ENCODE measurements at regions of chr5 and their contacts with region 1.

Region 1: GRCh38 chr5:80656425-80656824 is 1.6 kb upstream of the DHFR start:
- DNase-seq: no peak
- H3K4me3 ChIP-seq: no peak overlapping the region
- H3K27ac ChIP-seq: no peak overlapping the region
- H3K27me3 ChIP-seq: no peaks in the 10 kb centered on the region
- CTCF ChIP-seq: peak; percentile 14; the same call in 1 of the 2 replicates

Region 2: DNA sequence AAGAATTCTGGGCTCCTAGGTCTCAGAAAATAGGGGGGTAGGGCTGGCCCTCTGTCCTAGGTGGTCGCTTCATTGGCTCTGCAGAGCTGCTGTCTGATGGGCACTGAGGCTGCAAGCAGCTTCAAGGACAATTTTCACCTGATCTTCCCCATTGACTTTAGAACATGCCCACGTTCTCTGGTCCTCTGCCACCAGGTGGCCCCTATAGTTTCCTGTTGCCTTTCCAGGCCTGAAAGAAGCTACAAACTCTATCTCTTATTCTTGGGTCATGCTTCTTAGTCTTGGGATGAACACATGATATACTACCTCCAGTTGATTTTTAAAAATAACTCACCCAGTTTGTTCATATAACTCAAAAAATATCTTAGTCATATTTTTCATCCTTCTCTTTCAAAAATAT is 310.4 kb before region 1 on chr5:
- CTCF ChIA-PET with region 1: no interaction called
- POLR2A ChIA-PET with region 1: no interaction called
- DNase-seq: no peak
- H3K4me3 ChIP-seq: no peak overlapping the region
- H3K27ac ChIP-seq: no peak overlapping the region
- H3K27me3 ChIP-seq: no peaks in the 10 kb centered on the region
- CTCF ChIP-seq: peak; percentile 37

Region 3: DNA sequence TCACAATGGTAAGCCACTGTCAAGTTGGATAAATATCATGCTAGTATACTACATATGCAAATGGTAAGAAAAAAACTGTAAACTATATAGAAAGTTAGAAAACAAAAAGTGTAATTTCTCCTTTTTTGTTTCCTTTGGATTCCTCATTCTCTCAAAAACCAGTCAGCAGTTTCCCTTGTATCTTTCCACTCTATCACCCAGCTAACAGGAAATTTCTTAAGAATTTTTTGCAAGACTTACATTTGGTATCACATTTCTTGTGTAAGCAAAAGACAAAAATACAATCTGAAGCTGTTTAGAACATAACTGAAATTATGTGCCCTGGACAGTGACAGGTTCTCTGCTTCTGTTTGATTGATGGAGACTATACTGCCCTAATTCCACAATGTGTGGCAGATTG is 27.1 kb before region 1 on chr5:
- CTCF ChIA-PET with region 1: no interaction called
- POLR2A ChIA-PET with region 1: no interaction called
- DNase-seq: no peak
- H3K4me3 ChIP-seq: no peak overlapping the region
- H3K27ac ChIP-seq: no peak overlapping the region
- H3K27me3 ChIP-seq: no peaks in the 10 kb centered on the region
- CTCF ChIP-seq: no peak

Region 4: DNA sequence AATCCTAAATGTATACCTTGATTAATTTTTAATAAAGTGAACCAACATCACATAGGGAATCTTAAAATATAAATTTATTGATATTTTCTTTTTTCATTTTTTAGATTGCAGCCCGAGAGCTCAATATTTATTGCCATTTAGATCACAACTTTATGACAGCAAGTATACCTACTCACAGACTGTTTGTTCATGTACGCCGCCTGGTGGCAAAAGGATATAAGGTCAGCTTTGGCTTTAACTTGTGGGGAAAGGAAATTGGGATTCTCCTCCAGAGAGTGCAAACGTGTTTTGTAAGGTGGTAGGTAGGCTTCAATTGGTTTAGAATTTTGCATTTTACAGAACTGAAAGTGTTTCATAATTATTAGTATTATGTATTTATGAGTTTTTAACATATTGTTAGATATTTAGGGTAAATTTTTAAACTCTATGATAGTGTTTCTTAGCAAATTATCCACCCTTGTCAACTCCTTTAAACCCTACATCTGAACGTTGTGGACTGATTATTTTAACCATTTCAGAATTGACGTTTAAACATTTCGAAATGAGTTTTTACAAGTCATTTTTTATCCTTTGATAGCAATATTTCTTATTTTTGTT is 15.8 kb after region 1 on chr5:
- CTCF ChIA-PET with region 1: interaction called, 13 read pairs
- POLR2A ChIA-PET with region 1: no interaction called
- DNase-seq: peak; percentile 24
- H3K4me3 ChIP-seq: no peak overlapping the region
- H3K27ac ChIP-seq: no peak overlapping the region
- H3K27me3 ChIP-seq: no peaks in the 10 kb centered on the region
- CTCF ChIP-seq: peak; percentile 89

Region 5: GRCh38 chr5:80745490-80745889 is 89.1 kb after region 1 on chr5:
- CTCF ChIA-PET with region 1: no interaction called
- POLR2A ChIA-PET with region 1: no interaction called
- DNase-seq: no peak
- H3K4me3 ChIP-seq: no peak overlapping the region
- H3K27ac ChIP-seq: no peak overlapping the region
- H3K27me3 ChIP-seq: no peaks in the 10 kb centered on the region
- CTCF ChIP-seq: no peak